Activated CD8-positive, alpha-beta T cell treated with anti-CD3 and anti-CD28 coated beads for 36 hours (primary cell): ENCODE measurements at regions of chr18 and their contacts with region 1.

Region 1: GRCh38 chr18:3771121-3771971 is 321.4 kb downstream of the TGIF1 start:
- DNase-seq: peak; percentile 90
- ATAC-seq: peak; percentile 100
- H3K4me3 Mint-ChIP-seq: peak overlapping the region; percentile 56
- H3K27ac Mint-ChIP-seq: peak overlapping the region; percentile 68
- H3K4me1 Mint-ChIP-seq: peaks cover 9% of the 10 kb centered on the region
- H3K27me3 Mint-ChIP-seq: peaks cover 14% of the 10 kb centered on the region
- CTCF ChIP-seq: peak; percentile 98

Region 2: GRCh38 chr18:3554091-3554601 is 217.2 kb before region 1 on chr18:
- CTCF ChIA-PET with region 1: no interaction called
- POLR2A ChIA-PET with region 1: no interaction called
- intact Hi-C with region 1: no loop called
- DNase-seq: no peak
- ATAC-seq: no peak
- H3K4me3 Mint-ChIP-seq: no peak overlapping the region
- H3K27ac Mint-ChIP-seq: no peak overlapping the region
- H3K4me1 Mint-ChIP-seq: no peaks in the 10 kb centered on the region
- H3K27me3 Mint-ChIP-seq: no peaks in the 10 kb centered on the region
- CTCF ChIP-seq: no peak

Region 3: GRCh38 chr18:3688699-3689098 is 82.6 kb before region 1 on chr18:
- CTCF ChIA-PET with region 1: no interaction called
- POLR2A ChIA-PET with region 1: no interaction called
- intact Hi-C with region 1: no loop called
- DNase-seq: no peak
- ATAC-seq: no peak
- H3K4me3 Mint-ChIP-seq: no peak overlapping the region
- H3K27ac Mint-ChIP-seq: no peak overlapping the region
- H3K4me1 Mint-ChIP-seq: no peaks in the 10 kb centered on the region
- H3K27me3 Mint-ChIP-seq: no peaks in the 10 kb centered on the region
- CTCF ChIP-seq: no peak

Region 4: DNA sequence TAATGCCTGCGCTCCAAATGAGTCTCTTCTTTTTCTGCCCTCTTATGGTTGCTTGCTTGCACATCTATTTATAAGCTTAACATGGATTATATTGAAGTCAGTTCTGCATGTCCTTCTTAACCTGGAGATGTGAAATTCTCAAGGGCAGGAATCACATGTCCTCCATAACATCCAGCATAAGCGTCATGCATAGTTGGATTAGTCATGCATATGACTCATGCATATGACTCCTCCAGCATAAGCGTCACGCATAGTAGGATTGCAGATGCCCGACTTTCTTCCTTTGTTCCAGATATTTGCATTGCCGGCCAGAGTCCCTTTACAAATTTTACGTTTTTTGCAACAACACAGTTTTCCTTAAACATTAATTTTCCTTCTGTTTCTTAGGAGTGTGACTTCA is 12.8 kb before region 1 on chr18:
- CTCF ChIA-PET with region 1: interaction called, 22 read pairs
- POLR2A ChIA-PET with region 1: no interaction called
- intact Hi-C with region 1: no loop called
- DNase-seq: no peak
- ATAC-seq: no peak
- H3K4me3 Mint-ChIP-seq: no peak overlapping the region
- H3K27ac Mint-ChIP-seq: no peak overlapping the region
- H3K4me1 Mint-ChIP-seq: no peaks in the 10 kb centered on the region
- H3K27me3 Mint-ChIP-seq: no peaks in the 10 kb centered on the region
- CTCF ChIP-seq: no peak

Region 5: DNA sequence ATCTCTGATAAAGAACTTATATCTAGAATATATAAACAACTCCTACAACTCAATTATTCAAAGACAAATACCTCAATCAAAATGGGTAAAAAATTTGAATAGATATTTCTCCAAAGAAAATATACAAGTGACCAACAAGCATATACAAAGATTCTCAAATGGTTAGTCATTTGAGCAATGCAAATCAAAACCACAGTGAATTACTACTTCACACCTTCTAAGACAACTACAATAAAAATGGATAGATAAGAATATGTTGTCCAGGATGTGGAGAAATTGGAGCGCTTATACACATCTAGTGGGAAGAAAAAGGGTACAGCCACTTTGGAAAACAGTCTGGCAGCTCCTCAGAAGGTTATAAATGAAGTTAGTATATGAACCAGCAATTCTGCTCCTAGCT is 11.6 kb after region 1 on chr18:
- CTCF ChIA-PET with region 1: interaction called, 19 read pairs
- POLR2A ChIA-PET with region 1: no interaction called
- intact Hi-C with region 1: no loop called
- DNase-seq: no peak
- ATAC-seq: no peak
- H3K4me3 Mint-ChIP-seq: no peak overlapping the region
- H3K27ac Mint-ChIP-seq: no peak overlapping the region
- H3K4me1 Mint-ChIP-seq: no peaks in the 10 kb centered on the region
- H3K27me3 Mint-ChIP-seq: peaks cover 3% of the 10 kb centered on the region
- CTCF ChIP-seq: no peak

Region 6: DNA sequence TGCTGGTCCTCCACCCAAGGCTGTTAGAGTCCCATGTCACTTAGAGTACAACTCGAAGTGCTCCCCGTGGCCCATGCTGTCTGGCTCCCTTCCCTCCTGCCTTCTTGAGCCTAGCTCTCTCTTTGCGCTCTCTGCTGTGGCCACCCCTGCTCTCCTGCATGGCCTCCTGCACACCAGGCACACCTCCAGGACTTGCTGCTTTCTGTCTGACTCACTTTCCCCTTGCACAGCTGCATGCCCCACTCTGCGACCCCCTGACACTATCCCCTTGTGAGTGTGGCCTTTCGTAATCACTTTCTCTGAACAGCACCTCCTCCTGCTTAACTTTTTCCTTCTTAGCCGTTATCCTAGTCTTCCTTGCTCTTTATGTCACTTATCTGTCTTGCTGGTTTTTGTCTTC is 22.2 kb after region 1 on chr18:
- CTCF ChIA-PET with region 1: interaction called, 10 read pairs
- POLR2A ChIA-PET with region 1: no interaction called
- intact Hi-C with region 1: no loop called
- DNase-seq: no peak
- ATAC-seq: no peak
- H3K4me3 Mint-ChIP-seq: no peak overlapping the region
- H3K27ac Mint-ChIP-seq: no peak overlapping the region
- H3K4me1 Mint-ChIP-seq: peaks cover 2% of the 10 kb centered on the region
- H3K27me3 Mint-ChIP-seq: peaks cover 11% of the 10 kb centered on the region
- CTCF ChIP-seq: no peak

Region 7: GRCh38 chr18:3869848-3870247 is 98.5 kb after region 1 on chr18:
- CTCF ChIA-PET with region 1: interaction called, 53 read pairs
- POLR2A ChIA-PET with region 1: no interaction called
- intact Hi-C with region 1: loop called (anchors 5 kb)
- DNase-seq: no peak
- ATAC-seq: peak; percentile 37
- H3K4me3 Mint-ChIP-seq: no peak overlapping the region
- H3K27ac Mint-ChIP-seq: no peak overlapping the region
- H3K4me1 Mint-ChIP-seq: no peaks in the 10 kb centered on the region
- H3K27me3 Mint-ChIP-seq: peaks cover 12% of the 10 kb centered on the region
- CTCF ChIP-seq: peak; percentile 17

Region 8: GRCh38 chr18:3972291-3972985 is 201.1 kb after region 1 on chr18:
- CTCF ChIA-PET with region 1: interaction called, 10 read pairs
- POLR2A ChIA-PET with region 1: no interaction called
- intact Hi-C with region 1: no loop called
- DNase-seq: no peak
- ATAC-seq: no peak
- H3K4me3 Mint-ChIP-seq: no peak overlapping the region
- H3K27ac Mint-ChIP-seq: no peak overlapping the region
- H3K4me1 Mint-ChIP-seq: no peaks in the 10 kb centered on the region
- H3K27me3 Mint-ChIP-seq: no peaks in the 10 kb centered on the region
- CTCF ChIP-seq: no peak

Region 9: GRCh38 chr18:3995476-3996102 is 224.2 kb after region 1 on chr18:
- CTCF ChIA-PET with region 1: interaction called, 87 read pairs
- POLR2A ChIA-PET with region 1: no interaction called
- intact Hi-C with region 1: loop called (anchors 2 kb)
- DNase-seq: peak; percentile 77
- ATAC-seq: peak; percentile 79
- H3K4me3 Mint-ChIP-seq: no peak overlapping the region
- H3K27ac Mint-ChIP-seq: no peak overlapping the region
- H3K4me1 Mint-ChIP-seq: no peaks in the 10 kb centered on the region
- H3K27me3 Mint-ChIP-seq: peaks cover 5% of the 10 kb centered on the region
- CTCF ChIP-seq: peak; percentile 88